ENCODE measurements at regions of chr6 and their contacts with region 1.

Region 1: DNA sequence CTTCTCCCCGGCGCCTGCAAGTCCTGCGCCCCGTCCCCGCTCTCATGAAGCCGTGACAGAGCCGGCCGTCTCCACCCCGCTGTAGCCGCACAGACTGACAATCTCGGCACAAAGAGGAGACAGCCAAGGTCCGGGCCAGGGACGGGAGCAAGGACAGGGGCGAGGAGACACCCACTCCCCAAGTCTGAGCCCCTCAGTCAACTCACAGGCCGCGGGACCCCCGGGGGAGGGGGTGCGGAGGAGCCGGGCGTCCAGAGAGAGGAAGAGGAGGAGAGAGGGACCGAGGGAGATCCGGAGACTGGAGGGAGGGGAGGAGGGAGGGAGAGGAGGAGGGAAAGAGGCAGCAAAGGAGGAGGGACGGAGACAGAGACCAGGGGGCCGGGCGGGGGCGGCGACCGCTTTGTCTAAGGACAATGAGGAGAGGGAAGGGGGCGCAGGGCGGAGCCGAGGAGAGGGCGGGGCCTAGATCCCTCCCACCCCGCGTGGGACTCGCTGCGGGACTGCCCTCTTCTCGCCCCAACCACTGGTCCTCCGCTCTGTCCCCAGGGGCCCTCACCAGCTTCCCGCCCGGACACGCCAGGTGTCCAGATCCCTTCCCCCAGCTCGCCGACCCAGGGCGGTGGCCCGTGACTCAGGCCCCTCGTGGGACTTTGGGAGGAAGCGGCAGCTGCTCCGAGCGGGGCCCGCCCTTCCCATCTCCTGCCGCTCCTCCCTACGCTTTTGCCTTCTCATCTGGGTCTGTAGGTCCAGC is 638 bp upstream of the PPP1R18 start:
- DNase-seq: peak; percentile 96 to 98
- ATAC-seq: peak; percentile 73 to 87 (median 80)
- H3K4me3 ChIP-seq: peak overlapping the region; percentile 44 to 90 (median 80)
- H3K27ac ChIP-seq: peak overlapping the region; percentile 94 to 100 (median 98)
- H3K4me1 ChIP-seq: peaks cover 20 to 80% (median 58%) of the 10 kb centered on the region in 9 donors
- H3K27me3 ChIP-seq: no peaks in the 10 kb centered on the region
- CTCF ChIP-seq: no peak

Region 2: GRCh38 chr6:30357678-30358540 is 329.2 kb before region 1 on chr6:
- intact Hi-C with region 1: no loop called
- DNase-seq: peak in 1 of 2 donors; percentile 31
- ATAC-seq: peak in 6 of 8 donors; percentile 42 to 63 (median 56)
- H3K4me3 ChIP-seq: peak overlapping the region in 8 of 10 donors; percentile 19 to 36 (median 30)
- H3K27ac ChIP-seq: no peak overlapping the region
- H3K4me1 ChIP-seq: peaks cover 0 to 8% (median 4%) of the 10 kb centered on the region in 9 donors
- H3K27me3 ChIP-seq: peaks cover 0 to 98% (median 51%) of the 10 kb centered on the region in 7 donors
- CTCF ChIP-seq: peak; percentile 48 to 83 (median 71)

Region 3: GRCh38 chr6:30616811-30617564 is 70.1 kb before region 1 on chr6 and contains the start of gene PPP1R10:
- intact Hi-C with region 1: loop called in 1 of 10 experiments (anchors 5 kb)
- DNase-seq: peak; percentile 97 to 100
- ATAC-seq: peak; percentile 89 to 94 (median 92)
- H3K4me3 ChIP-seq: peak within 1 kb of the TSS; percentile 57 to 94 (median 76)
- H3K27ac ChIP-seq: peak within 1 kb of the TSS; percentile 86 to 98 (median 95)
- H3K4me1 ChIP-seq: peaks cover 12 to 44% (median 40%) of the 10 kb centered on the region in 9 donors
- H3K27me3 ChIP-seq: no peaks in the 10 kb centered on the region
- CTCF ChIP-seq: no peak
- total RNA-seq, gene PPP1R10: 24.9 to 51.1 (median 33.1) TPM

Region 4: DNA sequence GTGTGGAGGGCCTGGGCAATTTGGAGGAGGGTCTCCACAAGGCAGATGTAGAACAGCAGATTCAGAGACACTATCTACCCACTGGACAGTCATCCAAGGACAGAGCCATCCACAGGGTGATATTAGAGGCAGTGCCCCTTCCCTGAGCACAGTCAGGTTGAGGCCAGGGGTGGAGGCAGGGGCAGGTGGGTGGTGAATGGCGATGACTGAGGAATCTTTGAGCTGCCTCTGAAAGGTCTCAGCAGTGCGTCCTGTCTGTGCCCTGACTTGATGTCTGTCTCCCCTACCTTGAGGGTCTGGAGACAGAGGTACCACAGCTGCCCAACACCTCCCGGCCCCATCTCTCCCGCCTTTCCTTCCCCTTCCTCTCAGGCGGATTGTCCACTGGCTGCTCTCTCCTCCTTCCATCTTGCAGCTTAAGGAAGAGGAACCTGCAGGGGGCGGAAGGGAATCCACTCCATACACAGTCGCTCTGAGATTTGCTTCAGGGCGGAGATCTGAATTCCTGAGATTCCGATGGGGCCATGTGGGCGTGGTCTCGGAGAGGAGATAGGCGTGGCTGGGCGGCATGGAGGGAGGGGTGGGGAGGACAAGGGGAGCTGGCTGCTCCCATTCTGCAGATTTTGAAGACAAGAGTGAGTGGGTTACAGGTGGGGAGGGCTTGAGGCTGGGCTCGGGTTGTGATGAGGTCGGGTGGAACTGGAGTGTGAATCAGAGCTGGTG is 255.4 kb after region 1 on chr6:
- intact Hi-C with region 1: no loop called
- DNase-seq: peak; percentile 64 to 71
- ATAC-seq: peak; percentile 65 to 93 (median 86)
- H3K4me3 ChIP-seq: no peak overlapping the region
- H3K27ac ChIP-seq: no peak overlapping the region
- H3K4me1 ChIP-seq: peaks cover 0 to 13% (median 7%) of the 10 kb centered on the region in 9 donors
- H3K27me3 ChIP-seq: peaks cover 0 to 36% (median 9%) of the 10 kb centered on the region in 7 donors
- CTCF ChIP-seq: peak in 7 of 9 donors; percentile 12 to 53 (median 42)

Measured in heart right ventricle (tissue), 16 donors.